Panc1 (cell line): ENCODE measurements at regions of chr6 and their contacts with region 1.

Region 1: GRCh38 chr6:37279366-37280134 is 21.6 kb upstream of the TMEM217 start:
- DNase-seq: no peak
- ATAC-seq: no peak
- H3K4me3 ChIP-seq: no peak overlapping the region
- H3K27ac ChIP-seq: no peak overlapping the region
- H3K4me1 ChIP-seq: no peaks in the 10 kb centered on the region
- H3K27me3 ChIP-seq: no peaks in the 10 kb centered on the region
- CTCF ChIP-seq: no peak

Region 2: GRCh38 chr6:36350681-36351571 is 928.6 kb before region 1 on chr6:
- CTCF ChIA-PET with region 1: no interaction called
- POLR2A ChIA-PET with region 1: interaction called, 10 read pairs
- in situ Hi-C with region 1: no loop called
- intact Hi-C with region 1: no loop called
- DNase-seq: no peak
- ATAC-seq: 0 out of 2 replicates have a peak, but pooled peaks have one; percentile 58
- H3K4me3 ChIP-seq: no peak overlapping the region
- H3K27ac ChIP-seq: no peak overlapping the region
- H3K4me1 ChIP-seq: no peaks in the 10 kb centered on the region
- H3K27me3 ChIP-seq: no peaks in the 10 kb centered on the region; the same call in 1 of the 2 replicates
- CTCF ChIP-seq: no peak

Region 3: GRCh38 chr6:37547564-37548061 is 268.1 kb after region 1 on chr6:
- CTCF ChIA-PET with region 1: no interaction called
- POLR2A ChIA-PET with region 1: no interaction called
- in situ Hi-C with region 1: no loop called
- intact Hi-C with region 1: no loop called
- DNase-seq: no peak
- ATAC-seq: no peak
- H3K4me3 ChIP-seq: no peak overlapping the region
- H3K27ac ChIP-seq: peak overlapping the region; percentile 90
- H3K4me1 ChIP-seq: peaks cover 41% of the 10 kb centered on the region
- H3K27me3 ChIP-seq: no peaks in the 10 kb centered on the region
- CTCF ChIP-seq: no peak